T-cell (primary cell): ENCODE measurements at regions of chr2 and their contacts with region 1.

Region 1: DNA sequence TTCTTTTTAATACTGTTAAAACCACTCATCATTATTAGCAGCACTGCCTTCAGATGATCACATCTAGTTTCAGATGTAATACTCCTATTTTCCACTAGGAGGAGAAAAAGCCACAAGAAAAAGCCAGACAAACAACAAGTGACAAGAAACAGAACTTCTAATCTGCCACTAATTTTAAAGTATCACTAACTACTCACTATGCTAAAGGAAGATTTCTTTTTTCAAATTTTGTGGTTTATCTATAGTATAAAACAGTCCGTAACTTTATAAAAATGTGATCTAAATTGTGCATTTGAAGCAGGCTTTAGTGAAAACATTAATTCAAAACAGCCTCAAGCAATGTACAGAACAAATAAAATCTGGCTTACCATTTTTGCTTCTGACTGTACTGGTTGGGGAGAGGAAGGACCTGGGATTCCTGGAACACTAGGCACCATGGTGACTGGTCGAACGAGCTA is 56.8 kb downstream of the ATF2 start:
- DNase-seq: peak in 1 of 35 experiments; percentile 68
- ATAC-seq: peak in 2 of 4 experiments; percentile 29 to 44
- H3K4me3 ChIP-seq: no peak overlapping the region
- H3K4me3 Mint-ChIP-seq: no peak overlapping the region
- H3K27ac ChIP-seq: no peak overlapping the region
- H3K27ac Mint-ChIP-seq: peak overlapping the region; percentile 41 to 70
- H3K4me1 ChIP-seq: no peaks in the 10 kb centered on the region
- H3K4me1 Mint-ChIP-seq: peaks cover 0 to 4% (median 2%) of the 10 kb centered on the region in 3 donors
- H3K27me3 ChIP-seq: no peaks in the 10 kb centered on the region
- H3K27me3 Mint-ChIP-seq: no peaks in the 10 kb centered on the region

Region 2: DNA sequence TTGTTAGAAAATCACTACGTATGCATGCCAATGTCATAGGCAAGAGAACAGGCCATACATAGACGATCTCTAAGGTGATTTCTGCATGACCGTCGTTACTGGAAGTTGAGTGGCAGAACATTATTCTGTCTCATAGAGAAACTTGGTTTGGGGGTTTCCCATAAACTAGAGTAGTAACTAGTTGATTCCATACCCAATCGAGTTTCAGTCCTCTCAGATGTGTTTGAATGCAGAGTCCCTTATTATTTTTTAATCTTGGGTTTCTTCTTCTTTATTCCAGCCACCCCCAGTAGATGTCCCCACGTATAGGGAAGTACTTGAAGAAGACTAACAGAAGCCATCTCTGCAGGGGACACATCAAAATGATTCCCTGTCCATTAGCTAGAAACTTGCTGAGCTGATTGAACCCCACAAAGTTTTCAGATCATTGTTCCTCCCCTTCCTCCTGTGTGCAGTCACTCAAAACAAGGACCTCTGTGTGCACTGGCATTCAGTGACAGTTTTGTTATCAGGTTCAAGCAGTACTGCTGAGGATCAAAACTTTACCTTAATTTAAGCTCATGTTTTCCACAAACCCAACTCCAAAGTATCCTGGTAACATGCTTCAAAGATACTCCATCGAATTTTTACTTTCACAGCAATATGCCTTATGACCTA is 1824.9 kb before region 1 on chr2:
- CTCF ChIA-PET with region 1: no interaction called
- POLR2A ChIA-PET with region 1: no interaction called
- DNase-seq: peak in 1 of 35 experiments; percentile 4
- ATAC-seq: no peak
- H3K4me3 ChIP-seq: no peak overlapping the region
- H3K4me3 Mint-ChIP-seq: no peak overlapping the region
- H3K27ac ChIP-seq: no peak overlapping the region
- H3K27ac Mint-ChIP-seq: no peak overlapping the region
- H3K4me1 ChIP-seq: no peaks in the 10 kb centered on the region
- H3K4me1 Mint-ChIP-seq: peaks cover 0 to 2% (median 0%) of the 10 kb centered on the region in 3 donors
- H3K27me3 ChIP-seq: peaks cover 0 to 5% of the 10 kb centered on the region in 2 experiments
- H3K27me3 Mint-ChIP-seq: peaks cover 0 to 4% of the 10 kb centered on the region in 2 donors

Region 3: DNA sequence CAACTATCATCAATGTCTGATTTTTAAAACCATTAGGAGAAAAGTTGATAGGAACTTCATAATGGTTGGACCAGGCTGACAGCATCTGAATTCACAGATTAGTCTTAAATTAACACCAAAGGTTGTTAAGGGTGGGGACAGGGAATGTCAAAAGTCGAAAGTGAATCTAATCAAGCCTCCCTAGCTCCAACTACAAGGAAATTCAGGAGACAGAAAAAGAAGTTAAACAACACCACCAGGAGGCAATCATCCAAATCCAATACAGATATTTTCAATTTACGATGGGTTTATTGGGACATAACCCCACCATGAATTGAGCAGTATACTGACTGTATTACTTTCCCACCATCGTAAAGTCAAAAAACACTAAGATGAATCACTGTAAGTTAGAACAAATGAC is 23.9 kb after region 1 on chr2:
- CTCF ChIA-PET with region 1: interaction called in 1 of 2 experiments, 3 read pairs
- POLR2A ChIA-PET with region 1: interaction called in 1 of 2 experiments, 10 read pairs
- DNase-seq: no peak
- ATAC-seq: no peak
- H3K4me3 ChIP-seq: no peak overlapping the region
- H3K4me3 Mint-ChIP-seq: no peak overlapping the region
- H3K27ac ChIP-seq: no peak overlapping the region
- H3K27ac Mint-ChIP-seq: no peak overlapping the region
- H3K4me1 ChIP-seq: no peaks in the 10 kb centered on the region
- H3K4me1 Mint-ChIP-seq: peaks cover 18 to 37% (median 29%) of the 10 kb centered on the region in 3 donors
- H3K27me3 ChIP-seq: no peaks in the 10 kb centered on the region
- H3K27me3 Mint-ChIP-seq: no peaks in the 10 kb centered on the region